Ascending aorta (tissue), 2 donors: ENCODE measurements at regions of chr17 and their contacts with region 1.

Region 1: DNA sequence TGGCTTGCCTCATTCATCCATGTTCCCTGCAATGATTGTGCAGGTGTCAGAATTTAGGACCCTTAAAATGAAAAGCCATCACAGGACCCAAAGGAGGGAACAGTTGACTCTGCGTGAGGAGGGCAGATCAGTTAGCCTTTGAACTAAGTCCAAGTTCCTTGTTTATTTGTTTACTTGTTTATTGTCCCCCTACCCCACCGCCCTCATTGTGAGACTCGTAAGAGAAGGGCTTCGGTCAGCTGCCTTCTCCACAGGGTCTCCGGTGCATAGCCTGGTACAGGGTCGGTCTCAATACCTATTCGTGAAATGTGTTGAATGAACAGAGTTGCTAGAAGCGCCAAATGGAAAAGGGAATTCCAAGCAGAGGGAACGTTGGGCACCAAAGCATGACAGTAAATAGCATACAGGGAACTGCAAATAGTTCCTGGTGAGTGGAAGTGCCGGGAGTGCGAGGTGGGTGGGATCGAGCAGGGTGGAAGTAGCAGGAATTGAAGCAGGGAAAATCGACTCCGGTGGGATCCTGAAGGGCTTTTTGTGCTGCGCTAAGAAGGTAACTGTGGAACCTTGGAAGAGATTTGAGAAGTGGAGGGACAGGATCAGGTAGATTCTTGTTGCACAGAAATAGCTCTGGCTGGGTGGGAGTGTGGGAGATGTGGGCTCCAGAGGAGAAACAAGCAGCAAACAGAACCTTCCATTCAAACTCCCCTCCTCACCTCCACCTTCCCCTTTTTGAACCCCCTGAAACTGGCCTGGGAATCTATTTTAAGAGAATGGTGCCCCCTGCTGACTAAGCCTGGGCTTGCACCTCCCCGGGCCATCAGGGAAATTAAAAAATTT is 12.7 kb downstream of the SLC35B1 start:
- DNase-seq: no peak
- H3K4me3 ChIP-seq: peak overlapping the region; percentile 8 to 35
- H3K27ac ChIP-seq: peak overlapping the region; percentile 57 to 65
- H3K4me1 ChIP-seq: peaks cover 3 to 31% of the 10 kb centered on the region in 2 donors
- H3K27me3 ChIP-seq: no peaks in the 10 kb centered on the region
- CTCF ChIP-seq: peak; percentile 92 to 95 (median 95)

Region 2: DNA sequence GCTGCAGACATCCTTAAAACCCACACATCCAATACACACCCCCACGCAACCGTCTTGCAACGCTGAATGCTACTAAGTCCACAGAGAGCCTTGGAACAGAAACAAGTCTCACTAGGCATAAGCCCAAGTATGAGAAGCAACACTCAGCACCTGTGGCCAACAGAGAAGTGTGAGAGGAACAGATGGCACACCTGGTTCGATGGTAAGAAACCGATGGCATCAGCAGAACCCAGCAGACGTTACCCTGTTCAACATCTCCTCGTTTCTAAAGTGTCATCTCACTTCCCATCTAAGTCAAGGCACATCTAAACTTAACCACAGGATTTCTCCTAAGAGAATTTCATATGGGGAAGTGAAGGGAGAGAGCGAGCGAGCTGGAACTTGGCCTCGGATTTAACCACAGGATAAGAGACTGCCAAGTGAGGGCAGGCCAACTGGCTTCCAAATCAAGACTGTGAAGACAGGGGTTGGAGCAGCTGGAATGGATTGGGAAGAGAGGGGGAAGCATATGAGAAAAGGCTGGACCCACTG is 78.4 kb before region 1 on chr17:
- intact Hi-C with region 1: loop called (anchors 5 kb)
- DNase-seq: peak in 1 of 2 donors; percentile 82
- H3K4me3 ChIP-seq: peak overlapping the region in 1 of 2 donors; percentile 37
- H3K27ac ChIP-seq: peak overlapping the region; percentile 75 to 82
- H3K4me1 ChIP-seq: peaks cover 10 to 42% of the 10 kb centered on the region in 2 donors
- H3K27me3 ChIP-seq: no peaks in the 10 kb centered on the region
- CTCF ChIP-seq: no peak

Region 3: GRCh38 chr17:49637050-49637449 is 58.0 kb before region 1 on chr17:
- intact Hi-C with region 1: loop called (anchors 5 kb)
- DNase-seq: no peak
- H3K4me3 ChIP-seq: peak overlapping the region in 1 of 2 donors; percentile 17
- H3K27ac ChIP-seq: peak overlapping the region; percentile 88 to 94
- H3K4me1 ChIP-seq: peaks cover 32 to 79% of the 10 kb centered on the region in 2 donors
- H3K27me3 ChIP-seq: no peaks in the 10 kb centered on the region
- CTCF ChIP-seq: no peak

Region 4: DNA sequence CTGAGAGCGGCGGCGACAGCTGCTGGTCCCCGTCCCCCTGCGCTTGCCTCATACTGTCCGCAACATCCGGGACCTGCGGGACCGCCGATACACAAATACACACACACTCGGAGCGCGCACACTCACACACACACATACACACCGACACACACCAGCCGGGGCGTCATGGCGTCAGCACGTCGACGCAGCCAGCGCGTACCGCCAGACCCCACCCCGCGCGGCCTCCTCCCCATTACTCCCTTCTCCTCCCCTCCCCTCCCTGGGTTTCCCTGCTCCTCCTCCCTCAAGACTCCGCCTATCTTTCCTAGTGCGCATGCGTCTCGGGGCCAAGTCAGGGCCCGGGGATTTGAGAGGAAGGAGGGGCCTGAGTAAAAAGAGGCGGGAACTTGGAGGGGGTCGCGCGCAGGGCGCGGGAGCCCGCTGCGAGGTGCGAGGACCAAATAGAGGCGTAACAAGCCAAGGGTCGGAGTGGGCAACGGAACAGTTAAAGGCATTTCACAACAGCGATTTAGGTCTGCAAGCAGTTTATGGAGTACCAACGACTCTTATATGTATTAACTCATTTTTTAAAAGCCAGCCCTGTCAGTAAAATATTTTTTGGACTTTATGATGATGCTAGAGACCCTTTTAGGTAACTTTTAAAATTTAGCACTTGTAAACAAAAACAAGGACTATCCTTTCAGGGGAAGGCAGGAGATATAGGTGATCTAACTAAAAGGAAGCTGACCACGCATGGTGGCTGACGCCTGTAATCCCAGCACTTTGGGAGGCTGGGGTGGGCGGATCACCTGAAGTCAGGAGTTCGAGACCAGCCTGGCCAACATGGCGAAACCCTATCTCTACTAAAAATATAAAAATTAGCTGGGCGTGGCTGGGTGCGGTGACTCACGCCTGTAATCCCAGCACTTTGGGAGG is 16.9 kb before region 1 on chr17 and contains the start of gene SPOP:
- intact Hi-C with region 1: loop called (anchors 1 kb)
- DNase-seq: peak; percentile 96 to 100
- H3K4me3 ChIP-seq: peak within 1 kb of the TSS; percentile 79 to 83
- H3K27ac ChIP-seq: peak within 1 kb of the TSS; percentile 97 to 98
- H3K4me1 ChIP-seq: peaks cover 5 to 32% of the 10 kb centered on the region in 2 donors
- H3K27me3 ChIP-seq: no peaks in the 10 kb centered on the region
- CTCF ChIP-seq: no peak
- total RNA-seq, gene SPOP: 189 TPM

Region 5: GRCh38 chr17:49809056-49809455 is 114.0 kb after region 1 on chr17:
- intact Hi-C with region 1: no loop called
- DNase-seq: no peak
- H3K4me3 ChIP-seq: no peak overlapping the region
- H3K27ac ChIP-seq: no peak overlapping the region
- H3K4me1 ChIP-seq: peaks cover 0 to 3% of the 10 kb centered on the region in 2 donors
- H3K27me3 ChIP-seq: no peaks in the 10 kb centered on the region
- CTCF ChIP-seq: no peak